H1 (cell line): ENCODE measurements at regions of chr15 and their contacts with region 1.

Region 1: GRCh38 chr15:34708422-34708821 is 46.4 kb downstream of the GJD2 start:
- DNase-seq: peak in 1 of 2 experiments; percentile 15
- H3K4me3 ChIP-seq: no peak overlapping the region
- H3K27ac ChIP-seq: no peak overlapping the region
- H3K4me1 ChIP-seq: no peaks in the 10 kb centered on the region
- H3K27me3 ChIP-seq: no peaks in the 10 kb centered on the region
- CTCF ChIP-seq: peak in 2 of 3 experiments; percentile 69 to 93; a peak in 3 of 4 replicates
- EP300 ChIP-seq: no peak
- POLR2A ChIP-seq: no peak
- RAD21 ChIP-seq: peak; percentile 85 to 94

Region 2: DNA sequence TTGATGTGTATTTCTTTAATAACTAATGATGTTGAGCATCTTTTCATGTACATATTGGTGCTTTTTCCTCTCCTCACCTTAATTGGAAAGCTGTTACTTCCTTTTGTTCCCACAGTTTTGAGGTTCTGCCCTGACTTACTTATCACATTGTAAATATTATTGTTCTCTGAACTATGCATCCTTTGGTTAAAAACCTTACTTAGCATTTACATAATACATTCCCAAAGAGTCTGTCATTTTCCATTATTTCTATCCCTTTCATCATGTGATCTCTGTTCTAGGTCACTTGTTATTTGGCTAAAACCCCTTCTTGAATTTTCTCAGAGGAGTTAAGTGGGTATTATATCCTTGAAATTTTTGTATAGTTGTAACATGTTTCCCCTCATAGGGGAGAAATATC is 403.8 kb before region 1 on chr15:
- CTCF ChIA-PET with region 1: no interaction called
- POLR2A ChIA-PET with region 1: no interaction called
- DNase-seq: no peak
- H3K4me3 ChIP-seq: no peak overlapping the region
- H3K27ac ChIP-seq: no peak overlapping the region
- H3K4me1 ChIP-seq: no peaks in the 10 kb centered on the region
- H3K27me3 ChIP-seq: no peaks in the 10 kb centered on the region
- CTCF ChIP-seq: no peak
- EP300 ChIP-seq: no peak
- POLR2A ChIP-seq: no peak
- RAD21 ChIP-seq: no peak

Region 3: DNA sequence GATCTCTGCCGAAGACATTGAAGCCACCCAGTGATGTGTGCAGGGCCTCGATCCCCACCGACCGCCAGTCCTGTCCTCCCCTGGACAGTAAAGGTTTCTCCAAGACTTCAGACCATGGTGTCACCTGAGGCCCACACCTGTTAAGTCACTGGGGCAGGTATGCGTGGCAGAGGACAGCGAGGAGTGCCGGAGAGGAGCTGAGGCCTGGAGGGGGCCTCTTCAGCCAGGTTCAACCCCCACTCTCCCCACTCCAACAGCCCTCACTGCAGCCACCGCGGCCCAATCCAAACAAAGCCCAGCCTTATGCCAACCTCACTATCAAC is 127.4 kb before region 1 on chr15:
- CTCF ChIA-PET with region 1: no interaction called
- POLR2A ChIA-PET with region 1: no interaction called
- DNase-seq: no peak
- H3K4me3 ChIP-seq: no peak overlapping the region
- H3K27ac ChIP-seq: no peak overlapping the region
- H3K4me1 ChIP-seq: peaks cover 0 to 5% (median 4%) of the 10 kb centered on the region in 4 experiments; a peak in 5 of 7 replicates
- H3K27me3 ChIP-seq: peaks cover 0 to 17% (median 15%) of the 10 kb centered on the region in 4 experiments; a peak in 6 of 7 replicates
- CTCF ChIP-seq: no peak
- EP300 ChIP-seq: no peak
- POLR2A ChIP-seq: no peak
- RAD21 ChIP-seq: no peak

Region 4: DNA sequence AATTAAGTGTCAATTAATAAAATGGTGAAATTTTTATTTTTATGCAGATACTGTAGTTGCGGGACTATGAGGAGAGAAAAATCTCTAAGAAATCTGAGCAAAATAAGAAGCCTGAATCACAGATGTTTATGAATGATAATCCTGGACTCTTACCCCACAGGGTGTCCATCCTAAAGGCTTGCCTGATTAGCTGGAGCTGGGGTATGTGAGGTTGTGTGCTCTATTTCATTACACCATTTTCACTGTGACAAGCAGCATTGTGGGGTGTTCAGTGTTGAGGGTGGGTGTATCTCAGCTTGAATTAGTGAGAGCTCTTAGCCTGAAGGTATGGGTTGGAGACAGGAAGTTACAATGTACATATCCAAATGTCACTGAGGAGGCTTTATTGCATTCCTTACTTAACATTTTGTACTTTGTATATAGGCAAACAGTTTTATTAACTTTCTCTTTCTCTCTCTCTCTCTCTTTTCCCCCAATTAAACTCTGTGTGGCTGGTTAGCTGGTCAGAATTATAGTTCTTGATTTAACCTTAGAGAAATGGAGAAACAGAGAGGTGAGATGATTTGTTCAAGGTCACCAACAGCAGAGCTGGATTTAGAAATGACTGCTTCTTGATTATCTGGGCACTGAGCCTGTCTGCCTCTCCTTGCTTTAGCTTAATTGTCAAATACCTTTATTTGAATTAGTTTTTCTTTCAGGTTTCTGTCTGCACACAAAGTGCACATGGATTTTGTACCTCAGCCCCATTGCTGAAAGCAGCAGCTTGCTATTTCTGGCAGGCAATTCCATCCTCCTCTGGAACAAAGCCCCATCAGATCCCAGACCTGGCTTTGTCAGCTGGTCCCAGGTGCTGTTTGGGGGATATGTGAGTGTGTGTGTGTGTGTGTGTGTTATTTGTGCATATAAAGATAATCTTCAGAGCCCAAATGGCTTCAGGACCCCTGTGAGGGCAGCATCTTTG is 10.5 kb after region 1 on chr15:
- CTCF ChIA-PET with region 1: interaction called, 25 read pairs
- POLR2A ChIA-PET with region 1: no interaction called
- DNase-seq: no peak
- H3K4me3 ChIP-seq: no peak overlapping the region
- H3K27ac ChIP-seq: no peak overlapping the region
- H3K4me1 ChIP-seq: peaks cover 0 to 6% (median 1%) of the 10 kb centered on the region in 4 experiments; a peak in 3 of 7 replicates
- H3K27me3 ChIP-seq: no peaks in the 10 kb centered on the region
- CTCF ChIP-seq: no peak
- EP300 ChIP-seq: no peak
- POLR2A ChIP-seq: no peak
- RAD21 ChIP-seq: no peak

Region 5: GRCh38 chr15:34821831-34822230 is 113.4 kb after region 1 on chr15:
- CTCF ChIA-PET with region 1: interaction called, 10 read pairs
- POLR2A ChIA-PET with region 1: no interaction called
- DNase-seq: no peak
- H3K4me3 ChIP-seq: no peak overlapping the region
- H3K27ac ChIP-seq: no peak overlapping the region
- H3K4me1 ChIP-seq: no peaks in the 10 kb centered on the region
- H3K27me3 ChIP-seq: peaks cover 0 to 1% (median 0%) of the 10 kb centered on the region in 4 experiments; a peak in 1 of 7 replicates
- CTCF ChIP-seq: no peak
- EP300 ChIP-seq: no peak
- POLR2A ChIP-seq: no peak
- RAD21 ChIP-seq: no peak

Region 6: DNA sequence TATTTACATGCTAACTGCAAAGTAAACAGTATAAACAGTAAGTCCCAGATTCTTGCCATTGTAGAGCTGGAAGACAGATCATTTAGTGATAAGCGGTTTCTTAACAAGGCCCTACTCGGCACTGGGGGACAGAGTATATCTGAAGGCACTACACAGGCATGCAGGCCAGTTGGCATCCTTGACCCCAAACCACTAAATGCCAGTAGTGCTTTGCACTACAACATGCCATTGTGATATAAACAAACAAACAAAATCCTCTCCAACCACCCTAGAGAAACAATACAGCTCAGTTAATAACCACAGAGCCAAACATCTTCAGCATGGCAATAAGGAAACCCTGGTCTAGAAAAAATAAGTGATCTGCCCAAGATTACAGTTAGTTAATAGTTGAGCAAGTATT is 255.9 kb after region 1 on chr15:
- CTCF ChIA-PET with region 1: no interaction called
- POLR2A ChIA-PET with region 1: no interaction called
- DNase-seq: no peak
- H3K4me3 ChIP-seq: no peak overlapping the region
- H3K27ac ChIP-seq: no peak overlapping the region
- H3K4me1 ChIP-seq: peaks cover 0 to 3% (median 0%) of the 10 kb centered on the region in 4 experiments; a peak in 1 of 7 replicates
- H3K27me3 ChIP-seq: no peaks in the 10 kb centered on the region
- CTCF ChIP-seq: no peak
- EP300 ChIP-seq: no peak
- POLR2A ChIP-seq: no peak
- RAD21 ChIP-seq: no peak